ENCODE measurements at regions of chr7 and their contacts with region 1.

Region 1: DNA sequence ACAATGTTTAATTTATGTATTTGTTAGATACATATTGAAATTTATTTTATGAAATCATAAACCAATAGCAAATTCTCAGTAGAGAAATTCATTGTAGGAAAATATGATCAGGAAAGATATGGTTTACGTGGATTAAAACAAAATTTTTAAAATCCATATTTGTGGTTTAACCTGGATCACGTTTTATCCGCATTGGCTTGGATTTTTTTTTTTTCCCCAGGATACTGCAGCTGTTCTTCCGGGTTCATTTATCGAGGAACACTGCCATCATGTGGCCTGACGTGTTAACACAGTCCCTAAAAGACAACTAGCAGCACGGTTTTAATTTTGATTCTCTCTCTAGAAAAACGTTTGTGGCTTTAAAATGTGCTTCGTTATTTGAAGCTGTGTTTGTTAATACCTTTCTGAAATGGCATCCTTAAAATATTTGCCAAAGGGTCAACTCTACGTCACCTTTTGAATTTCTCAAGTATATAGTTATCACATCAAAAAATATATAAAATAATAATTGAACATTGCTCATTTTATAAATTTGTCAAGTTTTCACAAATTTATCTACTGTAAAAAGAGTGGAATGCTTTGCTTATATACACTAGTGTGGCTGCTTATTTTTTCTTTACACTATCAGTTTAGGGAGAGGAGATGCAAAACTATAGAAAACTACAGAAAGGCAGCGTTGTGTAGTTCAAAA is 8.7 kb upstream of the ASB4 start:
- DNase-seq: peak; percentile 68
- H3K4me3 ChIP-seq: no peak overlapping the region
- H3K27ac ChIP-seq: no peak overlapping the region
- H3K4me1 ChIP-seq: no peaks in the 10 kb centered on the region
- H3K27me3 ChIP-seq: peaks cover 2 to 6% of the 10 kb centered on the region in 2 experiments
- CTCF ChIP-seq: peak; percentile 59 to 67
- POLR2A ChIP-seq: no peak

Region 2: DNA sequence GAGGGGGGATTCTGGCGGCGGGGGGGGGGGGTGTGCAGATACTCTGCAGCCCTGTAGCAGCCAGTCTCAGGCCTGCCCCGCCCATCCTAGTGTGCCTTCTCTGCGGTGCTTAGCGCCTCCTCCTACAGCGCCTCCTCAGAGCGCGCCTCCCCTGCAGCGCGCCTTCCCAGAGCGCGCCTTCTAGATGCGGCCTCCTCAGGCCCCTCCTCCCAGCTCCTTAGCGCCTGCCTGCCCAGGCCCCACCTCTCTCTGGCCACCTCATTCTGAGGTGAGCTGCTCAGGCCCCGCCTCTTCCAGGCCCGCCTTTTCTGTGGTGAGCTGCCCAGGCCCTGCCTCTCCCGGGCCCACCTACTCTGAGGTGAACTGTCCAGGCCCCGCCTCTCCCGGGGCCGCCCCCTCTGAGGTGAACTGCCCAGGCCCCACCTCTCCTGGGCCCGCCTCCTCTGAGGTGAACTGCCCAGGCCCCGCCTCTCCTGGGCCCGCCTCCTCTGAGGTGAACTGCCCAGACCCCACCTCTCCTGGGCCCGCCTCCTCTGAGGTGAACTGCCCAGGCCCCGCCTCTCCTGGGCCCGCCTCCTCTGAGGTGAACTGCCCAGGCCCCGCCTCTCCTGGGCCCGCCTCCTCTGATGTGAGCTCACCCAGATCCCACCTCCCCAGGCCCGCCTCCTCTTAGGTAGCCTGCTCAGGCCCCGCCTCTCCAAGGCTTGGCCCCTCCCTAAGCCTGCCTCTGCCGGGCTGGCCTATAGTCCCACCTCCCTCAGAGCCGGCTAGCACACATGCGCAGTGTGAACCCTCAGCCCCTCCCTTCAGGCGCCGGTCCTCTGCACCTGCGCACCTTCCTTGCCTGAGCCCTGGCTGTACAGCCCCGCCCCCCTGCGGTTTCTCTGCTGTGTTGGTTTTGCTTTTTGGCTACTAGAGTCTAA is 819.0 kb before region 1 on chr7:
- CTCF ChIA-PET with region 1: interaction called, 4 read pairs
- POLR2A ChIA-PET with region 1: no interaction called
- dilution Hi-C with region 1: no loop called
- intact Hi-C with region 1: loop called (anchors 5 kb)
- DNase-seq: peak; percentile 95
- H3K4me3 ChIP-seq: peak overlapping the region in 2 of 3 experiments; percentile 38 to 41
- H3K27ac ChIP-seq: peak overlapping the region; percentile 47
- H3K4me1 ChIP-seq: peaks cover 20% of the 10 kb centered on the region
- H3K27me3 ChIP-seq: no peaks in the 10 kb centered on the region
- CTCF ChIP-seq: no peak
- POLR2A ChIP-seq: no peak

Region 3: GRCh38 chr7:94907026-94907810 is 569.8 kb before region 1 on chr7 and contains the start of gene PPP1R9A:
- CTCF ChIA-PET with region 1: interaction called, 3 read pairs
- POLR2A ChIA-PET with region 1: no interaction called
- dilution Hi-C with region 1: no loop called
- intact Hi-C with region 1: loop called (anchors 5 kb)
- DNase-seq: peak; percentile 23
- H3K4me3 ChIP-seq: peak within 1 kb of the TSS; percentile 35 to 63 (median 45)
- H3K27ac ChIP-seq: no peak within 1 kb of the TSS
- H3K4me1 ChIP-seq: peaks cover 3% of the 10 kb centered on the region
- H3K27me3 ChIP-seq: peaks cover 11 to 18% of the 10 kb centered on the region in 2 experiments
- CTCF ChIP-seq: peak in 1 of 2 donors; percentile 57
- POLR2A ChIP-seq: no peak
- total RNA-seq, gene PPP1R9A: 3.0 and 3.2 TPM in 2 replicates

Region 4: GRCh38 chr7:95246831-95247370 is 230.1 kb before region 1 on chr7:
- CTCF ChIA-PET with region 1: interaction called, 20 read pairs
- POLR2A ChIA-PET with region 1: no interaction called
- dilution Hi-C with region 1: no loop called
- intact Hi-C with region 1: loop called (anchors 5 kb)
- DNase-seq: peak; percentile 71
- H3K4me3 ChIP-seq: no peak overlapping the region
- H3K27ac ChIP-seq: no peak overlapping the region
- H3K4me1 ChIP-seq: no peaks in the 10 kb centered on the region
- H3K27me3 ChIP-seq: no peaks in the 10 kb centered on the region
- CTCF ChIP-seq: peak; percentile 63 to 68
- POLR2A ChIP-seq: no peak

Region 5: DNA sequence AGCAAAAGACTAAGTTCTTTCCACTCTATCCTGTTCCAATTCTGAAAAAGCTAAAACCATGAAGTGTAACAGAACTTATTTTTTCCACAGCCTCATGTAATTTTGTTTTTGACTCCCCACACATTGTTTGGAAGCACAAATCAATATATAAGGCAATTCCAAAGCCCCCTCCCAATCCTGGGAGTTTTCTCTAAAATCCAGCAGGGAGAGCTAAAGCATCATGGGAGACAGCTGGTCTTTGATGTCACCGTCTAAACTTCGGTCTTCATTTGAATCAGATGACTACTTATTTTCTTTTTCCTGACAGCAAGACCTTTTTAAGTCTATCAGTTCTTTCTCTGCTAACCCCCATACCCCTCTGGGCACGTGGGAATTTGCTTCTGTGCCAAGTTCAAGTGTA is 119.4 kb before region 1 on chr7:
- CTCF ChIA-PET with region 1: interaction called, 33 read pairs
- POLR2A ChIA-PET with region 1: no interaction called
- dilution Hi-C with region 1: no loop called
- intact Hi-C with region 1: loop called (anchors 1 kb)
- DNase-seq: no peak
- H3K4me3 ChIP-seq: no peak overlapping the region
- H3K27ac ChIP-seq: no peak overlapping the region
- H3K4me1 ChIP-seq: no peaks in the 10 kb centered on the region
- H3K27me3 ChIP-seq: no peaks in the 10 kb centered on the region
- CTCF ChIP-seq: no peak
- POLR2A ChIP-seq: no peak

Region 6: GRCh38 chr7:95491634-95492320 is 14.7 kb after region 1 on chr7:
- CTCF ChIA-PET with region 1: interaction called, 13 read pairs
- POLR2A ChIA-PET with region 1: no interaction called
- dilution Hi-C with region 1: no loop called
- intact Hi-C with region 1: no loop called
- DNase-seq: no peak
- H3K4me3 ChIP-seq: no peak overlapping the region
- H3K27ac ChIP-seq: no peak overlapping the region
- H3K4me1 ChIP-seq: no peaks in the 10 kb centered on the region
- H3K27me3 ChIP-seq: peaks cover 3% of the 10 kb centered on the region in 2 experiments
- CTCF ChIP-seq: no peak
- POLR2A ChIP-seq: no peak

Region 7: DNA sequence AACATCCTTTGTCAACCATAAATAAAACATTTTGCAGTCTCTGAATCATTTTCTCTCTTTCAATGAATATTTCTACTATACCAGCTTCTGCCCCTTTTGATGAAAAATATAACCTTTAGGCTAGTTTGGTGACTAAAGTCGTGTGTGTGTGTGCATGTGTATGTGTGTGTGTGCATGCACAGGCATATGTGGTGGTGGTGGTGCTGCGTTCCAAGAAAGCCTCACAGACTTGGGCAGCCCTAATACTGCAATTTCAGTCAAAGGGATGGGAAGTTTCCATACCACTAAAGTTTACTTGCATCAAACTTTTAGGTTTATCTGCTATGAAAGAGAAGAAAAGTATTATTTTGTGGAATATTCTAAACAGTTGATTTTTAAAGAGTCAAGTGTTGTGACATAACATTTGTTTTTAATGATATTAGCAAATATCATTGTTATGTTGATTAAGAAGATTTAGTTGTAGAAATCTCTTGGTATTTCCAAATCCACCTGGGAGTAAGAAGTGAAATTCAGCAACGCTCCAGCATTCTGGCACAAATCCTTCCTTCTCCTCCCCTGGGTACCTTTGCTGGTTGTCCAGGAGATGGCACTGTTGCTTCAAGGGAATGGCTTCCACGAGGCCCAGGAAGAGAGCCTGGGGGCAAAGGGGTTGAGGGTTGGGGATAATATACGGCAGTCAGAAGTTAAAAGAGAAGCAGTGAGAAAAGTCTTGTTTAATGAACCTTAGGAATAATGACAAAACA is 50.2 kb after region 1 on chr7:
- CTCF ChIA-PET with region 1: no interaction called
- POLR2A ChIA-PET with region 1: no interaction called
- dilution Hi-C with region 1: no loop called
- intact Hi-C with region 1: no loop called
- DNase-seq: peak; percentile 52
- H3K4me3 ChIP-seq: no peak overlapping the region
- H3K27ac ChIP-seq: no peak overlapping the region
- H3K4me1 ChIP-seq: peaks cover 2% of the 10 kb centered on the region
- H3K27me3 ChIP-seq: peaks cover 12 to 13% of the 10 kb centered on the region in 2 experiments
- CTCF ChIP-seq: peak; percentile 75 to 78
- POLR2A ChIP-seq: no peak